ENCODE measurements at regions of chr7 and their contacts with region 1.

Region 1: GRCh38 chr7:21507626-21508343 is 35.1 kb upstream of the DNAH11 start:
- DNase-seq: no peak
- H3K4me3 ChIP-seq: no peak overlapping the region
- H3K27ac ChIP-seq: no peak overlapping the region
- H3K4me1 ChIP-seq: no peaks in the 10 kb centered on the region
- H3K27me3 ChIP-seq: no peaks in the 10 kb centered on the region
- CTCF ChIP-seq: peak; percentile 81

Region 2: GRCh38 chr7:21253740-21254687 is 253.8 kb before region 1 on chr7:
- intact Hi-C with region 1: loop called (anchors 10 kb)
- DNase-seq: no peak
- H3K4me3 ChIP-seq: no peak overlapping the region
- H3K27ac ChIP-seq: no peak overlapping the region
- H3K4me1 ChIP-seq: no peaks in the 10 kb centered on the region
- H3K27me3 ChIP-seq: peaks cover 100% of the 10 kb centered on the region
- CTCF ChIP-seq: peak; percentile 61